Naive thymus-derived CD4-positive, alpha-beta T cell (primary cell): ENCODE measurements at regions of chr12 and their contacts with region 1.

Region 1: GRCh38 chr12:130013771-130014484 is 110.1 kb upstream of the TMEM132D start:
- DNase-seq: peak in 6 of 9 donors; percentile 2 to 46 (median 16)
- ATAC-seq: peak; percentile 42
- H3K4me3 ChIP-seq: no peak overlapping the region
- H3K4me3 Mint-ChIP-seq: no peak overlapping the region
- H3K27ac ChIP-seq: no peak overlapping the region
- H3K27ac Mint-ChIP-seq: no peak overlapping the region
- H3K4me1 ChIP-seq: no peaks in the 10 kb centered on the region
- H3K4me1 Mint-ChIP-seq: no peaks in the 10 kb centered on the region
- H3K27me3 ChIP-seq: no peaks in the 10 kb centered on the region
- H3K27me3 Mint-ChIP-seq: peaks cover 4 to 25% (median 6%) of the 10 kb centered on the region in 5 donors

Region 2: GRCh38 chr12:128259556-128260070 is 1754.3 kb before region 1 on chr12:
- CTCF ChIA-PET with region 1: no interaction called
- POLR2A ChIA-PET with region 1: no interaction called
- intact Hi-C with region 1: loop called in 1 of 2 experiments (anchors 5 kb)
- DNase-seq: no peak
- ATAC-seq: no peak
- H3K4me3 ChIP-seq: no peak overlapping the region
- H3K4me3 Mint-ChIP-seq: no peak overlapping the region
- H3K27ac ChIP-seq: no peak overlapping the region
- H3K27ac Mint-ChIP-seq: no peak overlapping the region
- H3K4me1 ChIP-seq: no peaks in the 10 kb centered on the region
- H3K4me1 Mint-ChIP-seq: no peaks in the 10 kb centered on the region
- H3K27me3 ChIP-seq: no peaks in the 10 kb centered on the region
- H3K27me3 Mint-ChIP-seq: peaks cover under 1 to 39% (median 30%) of the 10 kb centered on the region in 5 donors

Region 3: GRCh38 chr12:128644664-128645296 is 1369.1 kb before region 1 on chr12:
- CTCF ChIA-PET with region 1: no interaction called
- POLR2A ChIA-PET with region 1: no interaction called
- intact Hi-C with region 1: loop called in 1 of 2 experiments (anchors 2 kb)
- DNase-seq: peak in 1 of 9 donors; percentile 23
- ATAC-seq: no peak
- H3K4me3 ChIP-seq: no peak overlapping the region
- H3K4me3 Mint-ChIP-seq: no peak overlapping the region
- H3K27ac ChIP-seq: no peak overlapping the region
- H3K27ac Mint-ChIP-seq: no peak overlapping the region
- H3K4me1 ChIP-seq: no peaks in the 10 kb centered on the region
- H3K4me1 Mint-ChIP-seq: no peaks in the 10 kb centered on the region
- H3K27me3 ChIP-seq: no peaks in the 10 kb centered on the region
- H3K27me3 Mint-ChIP-seq: peaks cover 0 to 20% (median 4%) of the 10 kb centered on the region in 5 donors

Region 4: GRCh38 chr12:128783129-128783574 is 1230.8 kb before region 1 on chr12:
- CTCF ChIA-PET with region 1: no interaction called
- POLR2A ChIA-PET with region 1: no interaction called
- intact Hi-C with region 1: loop called (anchors 5 kb)
- DNase-seq: peak in 4 of 9 donors; percentile 6 to 28 (median 22)
- ATAC-seq: peak; percentile 86
- H3K4me3 ChIP-seq: no peak overlapping the region
- H3K4me3 Mint-ChIP-seq: peak overlapping the region; percentile 22 to 83 (median 68)
- H3K27ac ChIP-seq: no peak overlapping the region
- H3K27ac Mint-ChIP-seq: peak overlapping the region in 6 of 9 donors; percentile 33 to 92 (median 78)
- H3K4me1 ChIP-seq: no peaks in the 10 kb centered on the region
- H3K4me1 Mint-ChIP-seq: peaks cover 5 to 16% (median 9%) of the 10 kb centered on the region in 7 donors
- H3K27me3 ChIP-seq: no peaks in the 10 kb centered on the region
- H3K27me3 Mint-ChIP-seq: peaks cover 0 to 6% (median 0%) of the 10 kb centered on the region in 5 donors

Region 5: DNA sequence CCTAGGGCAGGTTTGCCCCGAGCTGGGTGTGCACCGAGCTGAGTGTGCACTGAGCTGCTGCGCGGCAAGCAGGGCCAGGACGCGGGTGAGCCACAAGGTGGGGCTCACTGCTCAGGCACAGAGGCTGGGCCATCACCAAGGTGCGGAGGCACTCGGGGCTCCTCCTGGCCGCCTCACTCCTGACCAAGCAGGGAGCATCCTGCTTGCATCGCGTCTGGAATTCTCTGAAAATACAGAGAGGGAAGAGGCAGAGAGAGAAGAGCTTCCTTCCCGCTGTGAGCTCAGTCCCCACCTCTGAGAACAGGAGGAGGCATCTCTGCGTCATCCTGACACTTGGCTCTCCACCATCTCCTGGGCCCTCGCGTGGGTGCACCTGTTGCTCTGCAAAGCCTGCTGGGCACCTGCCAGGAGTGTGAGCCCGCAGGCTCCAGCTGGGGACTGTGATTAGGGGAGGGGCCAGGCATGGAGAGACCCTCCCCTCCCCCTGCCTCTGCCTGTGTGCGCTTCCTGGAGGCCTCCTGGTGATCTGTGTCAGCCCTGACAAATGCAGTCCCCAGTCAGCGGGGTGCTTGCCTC is 1044.4 kb before region 1 on chr12:
- CTCF ChIA-PET with region 1: no interaction called
- POLR2A ChIA-PET with region 1: no interaction called
- intact Hi-C with region 1: loop called in 1 of 2 experiments (anchors 2 kb)
- DNase-seq: peak in 1 of 9 donors; percentile 42
- ATAC-seq: peak; percentile 63
- H3K4me3 ChIP-seq: no peak overlapping the region
- H3K4me3 Mint-ChIP-seq: peak overlapping the region in 5 of 10 donors; percentile 8 to 55 (median 19)
- H3K27ac ChIP-seq: no peak overlapping the region
- H3K27ac Mint-ChIP-seq: no peak overlapping the region
- H3K4me1 ChIP-seq: no peaks in the 10 kb centered on the region
- H3K4me1 Mint-ChIP-seq: peaks cover 4 to 7% (median 5%) of the 10 kb centered on the region in 7 donors
- H3K27me3 ChIP-seq: no peaks in the 10 kb centered on the region
- H3K27me3 Mint-ChIP-seq: peaks cover 13 to 44% (median 28%) of the 10 kb centered on the region in 5 donors

Region 6: GRCh38 chr12:129961091-129961490 is 52.8 kb before region 1 on chr12:
- CTCF ChIA-PET with region 1: no interaction called
- POLR2A ChIA-PET with region 1: no interaction called
- intact Hi-C with region 1: no loop called
- DNase-seq: no peak
- ATAC-seq: no peak
- H3K4me3 ChIP-seq: no peak overlapping the region
- H3K4me3 Mint-ChIP-seq: no peak overlapping the region
- H3K27ac ChIP-seq: no peak overlapping the region
- H3K27ac Mint-ChIP-seq: no peak overlapping the region
- H3K4me1 ChIP-seq: no peaks in the 10 kb centered on the region
- H3K4me1 Mint-ChIP-seq: no peaks in the 10 kb centered on the region
- H3K27me3 ChIP-seq: no peaks in the 10 kb centered on the region
- H3K27me3 Mint-ChIP-seq: peaks cover 0 to 35% (median 15%) of the 10 kb centered on the region in 5 donors

Region 7: DNA sequence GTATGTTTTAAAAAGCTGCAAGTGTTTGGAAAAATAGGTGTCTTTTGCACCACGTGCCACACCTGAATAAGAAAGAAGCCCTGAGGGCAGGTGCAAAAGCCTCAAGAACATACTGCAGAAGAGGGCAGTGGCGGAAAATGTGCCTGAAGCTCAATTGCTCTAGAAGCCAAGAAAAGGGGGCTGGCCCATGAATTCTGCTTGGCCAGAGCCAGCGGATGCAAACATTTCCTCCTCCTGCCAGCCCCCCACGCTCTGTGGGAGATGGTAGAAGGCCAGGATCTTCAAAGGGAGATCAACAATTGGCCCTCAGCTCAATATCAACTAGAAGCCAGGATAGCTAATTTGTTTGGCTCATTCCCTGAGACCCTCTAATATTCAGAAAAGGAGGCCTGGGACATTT is 29.8 kb before region 1 on chr12:
- CTCF ChIA-PET with region 1: no interaction called
- POLR2A ChIA-PET with region 1: no interaction called
- intact Hi-C with region 1: no loop called
- DNase-seq: no peak
- ATAC-seq: no peak
- H3K4me3 ChIP-seq: no peak overlapping the region
- H3K4me3 Mint-ChIP-seq: no peak overlapping the region
- H3K27ac ChIP-seq: no peak overlapping the region
- H3K27ac Mint-ChIP-seq: no peak overlapping the region
- H3K4me1 ChIP-seq: no peaks in the 10 kb centered on the region
- H3K4me1 Mint-ChIP-seq: no peaks in the 10 kb centered on the region
- H3K27me3 ChIP-seq: peaks cover 0 to 4% of the 10 kb centered on the region in 2 donors
- H3K27me3 Mint-ChIP-seq: peaks cover 0 to 52% (median 20%) of the 10 kb centered on the region in 5 donors